ENCODE measurements at regions of chr9 and their contacts with region 1.

Region 1: GRCh38 chr9:113401027-113401792 is at the start of gene ALAD:
- DNase-seq: peak; percentile 100
- H3K4me3 Mint-ChIP-seq: peak within 1 kb of the TSS; percentile 96
- H3K27ac Mint-ChIP-seq: peak within 1 kb of the TSS; percentile 90
- H3K4me1 Mint-ChIP-seq: peaks cover 23% of the 10 kb centered on the region
- H3K27me3 Mint-ChIP-seq: no peaks in the 10 kb centered on the region
- total RNA-seq, gene ALAD: 23.5 and 24.9 TPM in 2 replicates

Region 2: DNA sequence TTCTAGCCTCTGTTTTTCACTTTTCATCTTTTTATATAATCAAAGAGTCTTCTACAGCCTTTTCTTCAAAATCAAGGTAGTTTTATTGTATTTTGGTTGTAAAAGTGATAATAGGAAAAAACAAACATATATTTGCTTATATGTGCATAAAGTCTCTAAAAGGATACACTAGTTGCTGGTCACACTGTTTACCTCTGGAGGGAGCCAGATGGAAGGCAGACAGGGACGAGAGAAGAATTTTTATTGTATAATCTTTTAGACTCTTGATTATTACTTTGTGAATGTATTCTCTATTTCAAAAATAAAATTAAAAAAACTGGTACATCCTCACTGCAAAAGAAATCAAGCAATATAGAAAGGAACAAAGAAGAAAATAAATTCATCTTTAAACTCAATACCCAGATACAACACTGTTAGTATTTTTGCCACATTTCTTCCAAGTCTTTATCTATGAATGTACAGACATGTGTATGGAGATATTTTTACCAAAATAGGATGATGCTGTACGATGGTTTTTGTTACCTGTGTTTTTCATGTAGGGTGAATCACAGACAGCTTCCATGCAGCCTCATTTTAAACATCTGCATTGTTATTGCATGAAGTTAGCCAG is 91.9 kb before region 1 on chr9:
- intact Hi-C with region 1: loop called (anchors 1 kb)
- DNase-seq: peak; percentile 79
- H3K4me3 Mint-ChIP-seq: no peak overlapping the region
- H3K27ac Mint-ChIP-seq: no peak overlapping the region
- H3K4me1 Mint-ChIP-seq: peaks cover 2% of the 10 kb centered on the region
- H3K27me3 Mint-ChIP-seq: peaks cover 3% of the 10 kb centered on the region

Region 3: GRCh38 chr9:113349445-113350094 is 51.6 kb before region 1 on chr9 and contains the start of gene BSPRY:
- intact Hi-C with region 1: loop called (anchors 1 kb)
- DNase-seq: peak; percentile 87
- H3K4me3 Mint-ChIP-seq: peak within 1 kb of the TSS; percentile 89
- H3K27ac Mint-ChIP-seq: peak within 1 kb of the TSS; percentile 90
- H3K4me1 Mint-ChIP-seq: peaks cover 56% of the 10 kb centered on the region
- H3K27me3 Mint-ChIP-seq: no peaks in the 10 kb centered on the region
- total RNA-seq, gene BSPRY: 10.5 and 10.6 TPM in 2 replicates

Region 4: GRCh38 chr9:113578882-113579282 is 177.7 kb after region 1 on chr9:
- intact Hi-C with region 1: loop called (anchors 1 kb)
- DNase-seq: peak; percentile 96
- H3K4me3 Mint-ChIP-seq: peak overlapping the region; percentile 80
- H3K27ac Mint-ChIP-seq: peak overlapping the region; percentile 93
- H3K4me1 Mint-ChIP-seq: peaks cover 77% of the 10 kb centered on the region
- H3K27me3 Mint-ChIP-seq: no peaks in the 10 kb centered on the region

Measured in activated CD4-positive, alpha-beta T cell treated with anti-CD3 and anti-CD28 coated beads, Interleukin-2, amount 10 ng/mL, durations not matched to agents 24 days and 14 days (primary cell).